Motor neuron (in vitro differentiated cells): ENCODE measurements at regions of chr20 and their contacts with region 1.

Region 1: GRCh38 chr20:11544029-11544678 is 373.5 kb upstream of the BTBD3 start:
- ATAC-seq: peak; percentile 34 to 92 (median 60)
- H3K4me3 ChIP-seq: no peak overlapping the region
- H3K27ac ChIP-seq: no peak overlapping the region
- H3K4me1 ChIP-seq: peaks cover 7 to 13% of the 10 kb centered on the region in 2 donors

Region 2: DNA sequence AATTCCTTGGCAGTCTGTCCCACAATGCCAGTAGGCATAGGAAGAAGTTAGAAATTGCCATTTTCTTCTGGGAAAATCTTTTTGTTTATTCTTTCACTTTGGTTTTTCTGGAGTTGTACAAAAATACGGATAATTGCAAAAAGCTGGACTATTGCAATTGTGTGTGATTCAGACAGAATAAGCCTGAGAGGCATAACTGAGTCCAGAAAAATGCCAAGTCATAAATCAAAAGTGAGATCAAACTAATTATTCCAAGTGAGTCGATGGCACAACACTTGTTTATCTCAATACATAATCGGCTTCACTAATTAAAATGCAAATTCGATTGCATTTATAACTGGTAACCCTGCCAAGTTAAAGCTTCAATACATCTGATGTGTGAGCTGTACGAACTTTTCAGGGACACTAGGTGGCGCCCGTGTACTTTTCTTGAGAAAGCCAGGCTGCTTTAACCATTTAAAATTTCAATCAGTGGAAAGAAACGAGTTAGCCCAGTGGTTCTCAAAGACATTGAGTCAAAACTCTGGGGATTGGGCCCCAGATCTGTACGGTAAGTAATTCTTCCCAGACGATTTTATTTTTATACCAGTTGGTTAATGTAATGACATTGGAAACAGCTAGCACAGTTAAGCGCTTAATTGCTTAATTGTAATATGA is 1927.2 kb before region 1 on chr20:
- in situ Hi-C with region 1: loop called in 1 of 9 experiments (anchors 25 kb)
- ATAC-seq: peak; percentile 53 to 80 (median 62)
- H3K4me3 ChIP-seq: no peak overlapping the region
- H3K27ac ChIP-seq: no peak overlapping the region
- H3K4me1 ChIP-seq: no peaks in the 10 kb centered on the region

Region 3: GRCh38 chr20:9966966-9967365 is 1577.2 kb before region 1 on chr20:
- in situ Hi-C with region 1: loop called in 1 of 9 experiments (anchors 25 kb)
- ATAC-seq: peak in 3 of 8 experiments; percentile 41 to 69 (median 43)
- H3K4me3 ChIP-seq: no peak overlapping the region
- H3K27ac ChIP-seq: no peak overlapping the region
- H3K4me1 ChIP-seq: peaks cover 0 to 13% of the 10 kb centered on the region in 2 donors

Region 4: DNA sequence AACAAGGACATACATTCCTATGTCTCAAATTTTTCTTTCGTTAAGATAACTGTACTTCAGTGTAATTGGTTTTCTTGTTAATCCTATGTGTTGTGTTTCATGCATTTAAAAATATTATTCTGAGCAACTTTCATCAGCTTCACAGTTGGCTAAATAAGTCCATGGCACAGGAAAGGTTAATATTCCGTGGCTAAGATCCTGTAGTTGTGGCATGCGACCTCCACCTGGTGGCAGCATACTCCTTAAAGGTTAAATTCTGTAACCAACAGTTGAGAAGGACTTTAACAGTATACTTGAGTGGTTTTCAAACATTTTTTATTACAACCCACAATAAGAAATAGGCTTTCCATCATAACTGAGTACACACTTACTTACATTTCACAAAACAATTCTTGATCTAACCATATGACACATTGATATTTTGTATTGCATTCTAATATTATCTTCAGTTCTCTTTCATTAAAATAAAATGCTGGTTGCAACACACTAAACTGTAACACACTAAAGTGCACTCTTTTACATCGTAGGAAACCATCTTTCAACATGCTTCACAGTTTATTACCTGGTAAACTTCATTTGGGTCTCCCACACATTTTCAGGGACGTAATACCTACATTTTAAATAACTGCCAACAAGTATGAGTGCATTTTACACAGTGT is 990.7 kb before region 1 on chr20:
- in situ Hi-C with region 1: loop called in 4 of 9 experiments (anchors 25 kb)
- ATAC-seq: peak in 7 of 8 experiments; percentile 46 to 80 (median 71)
- H3K4me3 ChIP-seq: no peak overlapping the region
- H3K27ac ChIP-seq: no peak overlapping the region
- H3K4me1 ChIP-seq: peaks cover 0 to 10% of the 10 kb centered on the region in 2 donors

Region 5: GRCh38 chr20:11296951-11297350 is 247.2 kb before region 1 on chr20:
- in situ Hi-C with region 1: loop called in 1 of 9 experiments (anchors 25 kb)
- ATAC-seq: peak in 1 of 8 experiments; percentile 28
- H3K4me3 ChIP-seq: no peak overlapping the region
- H3K27ac ChIP-seq: no peak overlapping the region
- H3K4me1 ChIP-seq: peaks cover 4% of the 10 kb centered on the region in 2 donors

Region 6: DNA sequence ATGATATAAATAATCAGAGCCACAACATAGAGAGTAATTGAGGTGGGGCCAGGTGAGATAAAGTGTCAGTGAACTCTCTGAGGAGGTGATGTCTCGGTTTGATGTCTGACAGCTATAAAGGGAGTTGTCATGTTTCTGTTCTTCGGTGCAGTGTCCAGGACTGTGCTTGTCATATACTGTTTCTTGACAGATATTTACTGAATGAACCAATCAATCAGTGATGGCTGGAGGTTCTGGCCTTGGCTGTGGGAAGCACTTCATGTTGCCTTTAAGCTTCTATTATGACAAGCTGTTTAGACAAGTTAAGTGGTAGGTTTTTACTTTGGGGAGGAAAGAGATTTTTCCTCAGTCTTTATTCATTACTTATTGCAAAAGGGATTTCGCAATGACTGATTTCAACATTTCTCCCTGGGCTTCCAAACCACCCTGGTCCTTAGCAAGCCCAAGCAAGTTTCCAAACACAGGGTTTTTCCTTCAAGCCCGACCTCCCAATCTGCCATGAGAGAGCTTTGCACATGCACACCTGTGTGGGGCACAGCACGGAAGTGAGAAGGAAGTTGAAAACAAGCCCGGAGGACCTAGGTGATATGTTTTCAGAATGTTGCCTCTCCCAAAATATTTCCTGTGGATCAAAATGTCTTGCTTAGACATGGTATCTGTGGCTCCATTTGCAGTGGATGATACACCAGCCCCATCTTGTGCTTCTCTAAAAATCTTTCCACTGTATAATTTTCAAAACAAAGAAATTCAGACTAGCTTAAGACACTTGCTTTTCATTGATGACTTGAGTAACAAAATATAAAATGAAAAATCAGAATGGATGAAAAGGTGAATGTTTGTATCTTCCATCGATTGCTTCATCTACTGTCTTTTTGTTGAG is 193.8 kb before region 1 on chr20:
- in situ Hi-C with region 1: loop called in 1 of 9 experiments (anchors 25 kb)
- ATAC-seq: peak in 2 of 8 experiments; percentile 76 to 84
- H3K4me3 ChIP-seq: no peak overlapping the region
- H3K27ac ChIP-seq: no peak overlapping the region
- H3K4me1 ChIP-seq: peaks cover 0 to 13% of the 10 kb centered on the region in 2 donors